ENCODE measurements at regions of chr18 and their contacts with region 1.

Region 1: DNA sequence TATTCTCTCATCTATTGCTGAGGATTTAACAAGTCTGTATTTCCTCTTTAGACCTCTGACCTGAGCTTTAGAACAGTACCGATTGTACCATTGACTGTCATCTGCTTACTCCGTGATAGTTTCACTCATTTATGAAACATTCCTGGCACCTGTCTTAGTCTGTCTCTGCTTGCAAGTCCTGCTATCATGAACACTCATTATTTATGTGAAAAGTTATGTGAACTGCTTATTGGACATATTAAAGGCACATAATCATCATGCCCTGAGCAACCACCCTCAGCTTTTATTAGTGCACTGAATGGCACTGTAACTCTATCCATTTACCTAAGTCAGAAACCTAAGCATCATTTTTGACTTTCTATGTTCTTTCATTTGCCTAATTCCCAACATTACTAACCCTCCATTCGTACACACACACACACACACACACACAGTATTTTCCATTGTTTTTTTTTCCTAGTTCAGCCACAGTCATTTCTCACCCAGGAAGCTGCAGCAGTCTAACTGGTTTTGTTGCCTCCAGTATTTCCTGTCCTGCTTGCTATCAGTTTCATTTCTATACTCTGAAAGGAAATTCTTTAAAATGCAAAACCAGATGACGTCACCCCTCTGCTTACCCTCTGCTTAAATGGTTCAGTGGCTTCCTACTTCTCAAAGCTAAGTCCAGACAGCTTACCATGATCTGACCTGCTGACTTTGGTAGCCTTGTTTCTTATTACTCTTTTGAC is 146.1 kb downstream of the HAUS1 start:
- DNase-seq: no peak
- H3K4me3 ChIP-seq: no peak overlapping the region
- H3K27me3 ChIP-seq: no peaks in the 10 kb centered on the region
- CTCF ChIP-seq: no peak

Region 2: GRCh38 chr18:46226461-46226860 is 23.8 kb before region 1 on chr18:
- CTCF ChIA-PET with region 1: no interaction called
- POLR2A ChIA-PET with region 1: interaction called, 19 read pairs
- DNase-seq: peak; percentile 41
- H3K4me3 ChIP-seq: no peak overlapping the region
- H3K27me3 ChIP-seq: no peaks in the 10 kb centered on the region
- CTCF ChIP-seq: no peak

Region 3: GRCh38 chr18:46264235-46264893 is 14.1 kb after region 1 on chr18:
- CTCF ChIA-PET with region 1: no interaction called
- POLR2A ChIA-PET with region 1: no interaction called
- DNase-seq: no peak
- H3K4me3 ChIP-seq: no peak overlapping the region
- H3K27me3 ChIP-seq: no peaks in the 10 kb centered on the region
- CTCF ChIP-seq: no peak

Measured in BJ (cell line).